ENCODE measurements at regions of chr10 and their contacts with region 1.

Region 1: DNA sequence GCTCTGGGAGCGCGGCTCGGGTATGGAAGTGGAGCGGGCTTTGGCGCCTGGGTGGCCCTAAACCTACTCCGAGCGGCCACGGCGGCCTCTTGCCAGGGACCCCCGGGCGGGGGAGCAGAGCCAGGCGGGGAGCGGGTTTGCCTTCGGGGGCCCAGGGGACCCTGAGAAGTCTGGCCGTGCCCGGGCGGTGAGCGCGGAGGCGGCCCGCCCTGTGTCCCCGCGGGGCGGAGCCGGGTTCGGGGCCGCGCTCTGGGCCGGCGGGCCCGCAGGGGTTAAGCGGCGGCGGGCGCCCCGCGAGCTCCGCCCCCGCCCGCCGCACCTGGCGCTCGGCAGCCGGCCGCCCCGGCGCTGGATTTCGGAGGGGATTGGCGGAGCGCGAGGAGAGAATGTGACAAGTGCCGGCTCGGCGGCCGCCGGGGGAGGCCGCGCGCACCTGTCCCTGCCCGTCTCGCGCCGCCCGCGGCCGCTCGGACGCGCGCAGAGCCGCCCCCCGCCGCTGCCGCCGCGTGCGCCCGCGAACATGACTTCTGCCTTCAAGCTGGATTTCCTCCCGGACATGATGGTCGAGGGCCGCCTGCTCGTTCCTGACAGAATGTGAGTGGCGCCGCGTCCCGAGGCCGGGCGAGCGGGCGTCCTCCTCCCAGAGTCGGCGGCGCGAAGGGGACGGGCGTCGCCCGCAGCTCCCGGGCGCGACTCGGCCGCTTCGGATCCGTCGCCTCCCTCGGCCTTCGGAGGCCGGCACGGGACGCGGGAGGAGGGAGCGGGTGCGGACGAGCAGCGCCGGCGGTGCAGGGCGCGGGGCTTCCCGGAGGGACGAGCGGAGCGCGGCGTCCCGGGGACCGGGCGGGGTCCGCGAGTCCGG is at the start of gene CELF2:
- DNase-seq: peak; percentile 70 to 84 (median 82)
- ATAC-seq: peak; percentile 51 to 89 (median 76)
- H3K4me3 ChIP-seq: peak within 1 kb of the TSS; percentile 63 to 83 (median 76)
- H3K27ac ChIP-seq: peak within 1 kb of the TSS; percentile 75 to 95 (median 92)
- H3K4me1 ChIP-seq: peaks cover 0 to 72% (median 32%) of the 10 kb centered on the region in 12 donors
- H3K27me3 ChIP-seq: peaks cover 0 to 46% (median 0%) of the 10 kb centered on the region in 9 donors
- CTCF ChIP-seq: no peak
- POLR2A ChIP-seq: peak in 1 of 2 donors; percentile 15
- total RNA-seq, gene CELF2: 61.2 to 103 (median 73.3) TPM

Region 2: DNA sequence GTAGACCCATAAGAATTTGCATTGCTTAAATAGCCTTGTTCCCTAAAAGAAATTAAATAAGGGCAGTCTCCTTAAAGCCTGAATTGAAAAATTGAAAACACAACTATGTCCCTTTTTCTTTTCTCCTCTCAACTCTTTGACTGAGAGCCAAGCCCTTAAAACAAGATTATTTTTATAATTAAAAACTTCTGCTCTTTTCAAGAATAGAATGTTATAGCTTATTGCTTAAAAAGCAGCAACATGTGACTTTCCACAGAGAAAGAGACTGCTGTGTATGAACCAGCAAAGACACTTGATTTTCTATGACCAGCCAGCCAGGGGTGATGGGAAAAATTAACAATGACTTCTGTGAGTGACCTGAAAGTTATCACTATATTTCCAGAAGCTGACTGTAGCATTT is 295.4 kb before region 1 on chr10:
- intact Hi-C with region 1: loop called in 1 of 10 experiments (anchors 5 kb)
- DNase-seq: no peak
- ATAC-seq: no peak
- H3K4me3 ChIP-seq: no peak overlapping the region
- H3K27ac ChIP-seq: no peak overlapping the region
- H3K4me1 ChIP-seq: no peaks in the 10 kb centered on the region
- H3K27me3 ChIP-seq: no peaks in the 10 kb centered on the region
- CTCF ChIP-seq: no peak
- POLR2A ChIP-seq: no peak

Region 3: GRCh38 chr10:10792681-10793080 is 225.1 kb before region 1 on chr10:
- intact Hi-C with region 1: loop called in 3 of 10 experiments (anchors 5 to 10 kb)
- DNase-seq: no peak
- ATAC-seq: peak; percentile 27 to 78 (median 42)
- H3K4me3 ChIP-seq: peak overlapping the region in 1 of 12 donors; percentile 25
- H3K27ac ChIP-seq: peak overlapping the region in 7 of 12 donors; percentile 4 to 73 (median 27)
- H3K4me1 ChIP-seq: peaks cover 0 to 46% (median 34%) of the 10 kb centered on the region in 12 donors
- H3K27me3 ChIP-seq: no peaks in the 10 kb centered on the region
- CTCF ChIP-seq: no peak
- POLR2A ChIP-seq: no peak

Region 4: DNA sequence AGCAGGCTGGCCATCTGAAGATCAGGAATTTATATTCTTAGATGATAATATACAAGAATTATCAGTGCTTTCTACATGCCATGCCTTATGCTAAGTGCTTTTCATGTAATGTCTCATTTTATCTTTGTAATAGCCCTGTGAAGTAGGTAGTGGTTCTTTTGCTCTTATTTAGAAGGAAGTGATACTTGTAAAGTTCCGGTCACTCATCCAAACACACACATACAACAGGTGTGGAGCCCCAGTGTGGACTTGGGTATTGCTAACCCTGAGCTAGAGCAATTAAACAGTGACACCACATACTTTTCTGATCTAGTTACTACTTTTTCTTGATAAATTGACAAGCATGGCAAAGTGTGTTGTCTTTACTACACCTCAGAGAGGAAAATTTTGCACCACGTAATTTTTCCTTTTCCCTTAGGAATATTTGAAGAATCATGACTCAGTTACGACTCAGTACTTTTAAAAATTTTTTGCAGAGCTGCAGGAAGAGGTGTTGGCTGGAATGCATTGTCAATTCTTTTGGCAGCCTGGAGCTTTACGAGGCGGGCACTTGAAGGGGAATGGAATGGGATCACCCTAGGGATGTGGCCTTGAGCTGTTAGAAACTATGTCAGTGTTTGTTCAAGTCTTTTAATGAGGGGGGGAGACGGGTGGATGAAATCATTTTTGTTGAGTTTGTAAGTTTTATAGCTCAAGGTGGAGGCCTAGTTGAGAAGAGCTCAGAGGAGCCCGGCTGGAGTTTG is 212.6 kb before region 1 on chr10:
- intact Hi-C with region 1: loop called in 3 of 10 experiments (anchors 5 to 10 kb)
- DNase-seq: peak in 1 of 5 donors; percentile 46
- ATAC-seq: peak in 3 of 4 donors; percentile 52 to 63 (median 63)
- H3K4me3 ChIP-seq: no peak overlapping the region
- H3K27ac ChIP-seq: peak overlapping the region in 7 of 12 donors; percentile 16 to 70 (median 41)
- H3K4me1 ChIP-seq: peaks cover 0 to 43% (median 18%) of the 10 kb centered on the region in 12 donors
- H3K27me3 ChIP-seq: no peaks in the 10 kb centered on the region
- CTCF ChIP-seq: no peak
- POLR2A ChIP-seq: no peak

Region 5: DNA sequence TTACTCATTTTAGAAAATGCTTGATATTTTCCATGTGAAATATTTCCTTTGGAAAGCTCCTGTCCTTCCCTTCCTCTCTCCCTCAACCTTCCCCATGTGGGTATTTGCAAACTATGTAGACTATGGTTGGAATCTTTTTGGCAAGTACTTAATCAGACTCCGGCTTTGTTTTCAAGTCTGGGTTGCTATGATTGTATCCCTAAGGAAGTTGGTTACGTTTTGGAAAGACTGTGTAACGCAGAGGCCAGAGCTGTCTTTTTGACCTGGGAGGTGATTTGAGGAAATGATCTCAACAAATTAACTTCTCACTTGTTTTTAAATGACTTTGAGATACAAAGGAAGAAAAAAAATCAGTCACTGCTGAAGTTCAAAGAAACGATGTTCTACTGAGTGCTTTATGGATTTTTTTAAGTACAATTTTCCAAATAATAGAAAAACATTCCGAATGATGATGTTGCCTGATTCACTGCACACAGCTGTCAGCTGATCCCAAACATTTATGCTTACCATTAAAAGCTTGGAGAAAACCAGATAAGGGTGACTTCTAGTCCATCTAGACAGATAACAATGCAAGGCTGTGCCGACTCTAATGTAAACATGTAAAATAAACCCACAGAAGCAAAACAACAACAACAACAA is 145.6 kb before region 1 on chr10:
- intact Hi-C with region 1: loop called in 5 of 10 experiments (anchors 5 to 10 kb)
- DNase-seq: peak in 3 of 5 donors; percentile 43 to 57 (median 54)
- ATAC-seq: peak; percentile 91 to 99 (median 97)
- H3K4me3 ChIP-seq: peak overlapping the region in 1 of 12 donors; percentile 20
- H3K27ac ChIP-seq: peak overlapping the region; percentile 53 to 91 (median 76)
- H3K4me1 ChIP-seq: peaks cover 0 to 29% (median 19%) of the 10 kb centered on the region in 12 donors
- H3K27me3 ChIP-seq: no peaks in the 10 kb centered on the region
- CTCF ChIP-seq: no peak
- POLR2A ChIP-seq: no peak

Region 6: DNA sequence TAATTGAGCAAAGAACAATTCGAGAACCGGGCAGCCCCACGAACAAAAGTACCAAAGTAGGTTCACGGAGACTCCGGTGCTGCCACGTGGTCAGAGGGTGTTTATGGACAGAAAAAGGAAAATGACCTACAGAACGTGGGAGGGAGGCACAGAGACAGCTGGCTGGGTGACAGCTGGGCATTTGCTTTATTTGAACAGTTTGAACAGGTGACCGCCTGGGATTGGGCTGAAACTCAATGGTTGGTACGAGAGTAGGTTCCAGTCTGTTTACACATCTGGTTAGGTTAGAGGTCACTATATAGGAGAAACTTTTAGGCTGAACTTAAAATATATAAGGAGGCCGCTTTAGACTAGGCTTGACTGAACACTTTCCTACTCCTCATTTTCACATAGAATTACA is 50.8 kb before region 1 on chr10:
- intact Hi-C with region 1: loop called in 1 of 10 experiments (anchors 5 kb)
- DNase-seq: no peak
- ATAC-seq: no peak
- H3K4me3 ChIP-seq: no peak overlapping the region
- H3K27ac ChIP-seq: no peak overlapping the region
- H3K4me1 ChIP-seq: peaks cover 0 to 8% (median 0%) of the 10 kb centered on the region in 12 donors
- H3K27me3 ChIP-seq: no peaks in the 10 kb centered on the region
- CTCF ChIP-seq: no peak
- POLR2A ChIP-seq: no peak

Region 7: DNA sequence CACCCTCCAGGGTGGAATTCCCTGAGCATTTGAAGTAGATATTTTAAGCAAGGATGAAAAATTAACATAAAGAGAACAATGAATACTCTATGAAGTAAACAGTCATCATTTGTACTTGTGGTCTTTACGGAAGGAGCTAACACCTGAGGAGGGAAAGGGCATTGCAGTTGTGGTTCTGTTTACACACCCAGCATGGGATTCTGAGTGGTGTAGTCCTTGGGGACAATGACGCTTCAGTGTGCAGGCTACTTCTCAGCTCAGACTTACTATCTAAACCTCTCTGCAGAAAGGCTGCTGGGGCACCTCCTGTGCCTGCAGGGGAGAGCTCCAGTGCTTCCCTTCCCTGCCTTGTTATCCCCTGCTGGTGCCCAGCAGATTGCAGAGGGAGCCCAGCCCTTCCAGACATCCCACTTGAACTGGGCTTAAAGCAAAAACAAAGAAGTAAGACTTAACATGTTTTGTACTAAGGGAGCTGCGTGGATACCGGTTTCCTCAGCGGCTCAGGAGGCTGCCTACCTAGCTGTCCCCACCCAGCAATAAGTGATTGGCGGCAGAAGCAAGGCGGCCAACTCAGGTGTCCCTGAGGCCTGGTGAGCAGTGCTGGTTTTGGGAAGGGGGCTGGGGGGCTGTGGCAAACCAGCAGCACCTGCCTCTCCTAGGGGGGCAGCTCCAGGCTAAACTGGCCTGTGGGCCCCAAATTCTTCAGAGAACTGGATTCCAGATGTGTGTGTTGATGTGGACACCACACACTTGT is 89.0 kb after region 1 on chr10:
- intact Hi-C with region 1: no loop called
- DNase-seq: no peak
- ATAC-seq: no peak
- H3K4me3 ChIP-seq: no peak overlapping the region
- H3K27ac ChIP-seq: no peak overlapping the region
- H3K4me1 ChIP-seq: peaks cover 0 to 49% (median 15%) of the 10 kb centered on the region in 12 donors
- H3K27me3 ChIP-seq: no peaks in the 10 kb centered on the region
- CTCF ChIP-seq: no peak
- POLR2A ChIP-seq: no peak